Endothelial cell of umbilical vein (primary cell): ENCODE measurements at regions of chr3 and their contacts with region 1.

Region 1: DNA sequence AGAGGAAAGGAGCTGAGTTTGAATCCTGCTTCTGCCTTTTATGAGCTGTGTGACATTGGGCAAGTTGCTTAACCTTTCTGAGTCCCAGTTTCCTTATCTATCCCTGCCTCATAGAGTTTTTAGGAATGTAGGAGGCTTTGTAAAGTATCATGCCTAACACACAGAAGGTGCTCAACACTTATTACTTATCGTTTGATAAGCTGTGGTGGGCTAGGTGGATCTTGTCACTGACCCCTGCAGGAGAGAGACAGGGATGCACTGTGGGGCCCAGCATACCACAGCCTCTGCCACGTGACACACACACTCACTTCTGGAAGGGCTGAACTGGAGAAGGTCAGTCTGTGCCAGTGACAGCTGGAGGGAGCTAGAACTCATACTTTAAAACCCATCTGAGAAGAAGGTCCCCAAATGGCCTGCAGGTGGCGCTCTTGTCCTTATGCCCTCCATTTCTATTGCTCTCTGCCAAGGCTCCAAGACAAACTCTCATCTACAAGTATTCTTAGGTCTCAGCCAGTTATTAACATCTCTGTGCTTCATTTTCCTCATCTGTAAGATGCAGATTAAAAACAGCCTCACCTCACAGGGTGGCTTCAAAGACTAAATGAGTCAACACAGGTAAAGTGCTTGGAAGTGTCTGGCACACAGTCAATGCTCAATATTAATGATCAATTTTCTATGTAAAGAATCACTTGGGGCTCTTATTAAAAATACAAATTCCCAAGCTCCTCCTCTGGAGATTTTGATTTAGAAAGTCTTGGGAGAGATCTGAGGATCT is 57.5 kb upstream of the HACD2 start:
- DNase-seq: peak; percentile 90
- H3K4me3 ChIP-seq: no peak overlapping the region
- H3K27ac ChIP-seq: no peak overlapping the region
- H3K4me1 ChIP-seq: no peaks in the 10 kb centered on the region
- H3K27me3 ChIP-seq: no peaks in the 10 kb centered on the region
- CTCF ChIP-seq: peak; percentile 85 to 97
- POLR2A ChIP-seq: no peak

Region 2: GRCh38 chr3:123284399-123285010 is 357.9 kb before region 1 on chr3:
- CTCF ChIA-PET with region 1: no interaction called
- POLR2A ChIA-PET with region 1: no interaction called
- dilution Hi-C with region 1: no loop called
- intact Hi-C with region 1: no loop called
- DNase-seq: no peak
- H3K4me3 ChIP-seq: no peak overlapping the region
- H3K27ac ChIP-seq: no peak overlapping the region
- H3K4me1 ChIP-seq: no peaks in the 10 kb centered on the region
- H3K27me3 ChIP-seq: no peaks in the 10 kb centered on the region
- CTCF ChIP-seq: no peak
- POLR2A ChIP-seq: no peak

Region 3: GRCh38 chr3:123584988-123585937 is 57.1 kb before region 1 on chr3 and contains the start of gene HACD2:
- CTCF ChIA-PET with region 1: interaction called, 16 read pairs
- POLR2A ChIA-PET with region 1: no interaction called
- dilution Hi-C with region 1: no loop called
- intact Hi-C with region 1: loop called (anchors 1 kb)
- DNase-seq: peak; percentile 98
- H3K4me3 ChIP-seq: peak within 1 kb of the TSS; percentile 66 to 87 (median 85)
- H3K27ac ChIP-seq: peak within 1 kb of the TSS; percentile 90
- H3K4me1 ChIP-seq: peaks cover 7% of the 10 kb centered on the region
- H3K27me3 ChIP-seq: no peaks in the 10 kb centered on the region
- CTCF ChIP-seq: no peak
- POLR2A ChIP-seq: peak; percentile 91
- total RNA-seq, gene HACD2: 20.9 and 23.5 TPM in 2 replicates

Region 4: GRCh38 chr3:123632161-123632655 is 10.2 kb before region 1 on chr3:
- CTCF ChIA-PET with region 1: interaction called, 21 read pairs
- POLR2A ChIA-PET with region 1: interaction called, 3 read pairs
- dilution Hi-C with region 1: no loop called
- intact Hi-C with region 1: no loop called
- DNase-seq: no peak
- H3K4me3 ChIP-seq: no peak overlapping the region
- H3K27ac ChIP-seq: no peak overlapping the region
- H3K4me1 ChIP-seq: no peaks in the 10 kb centered on the region
- H3K27me3 ChIP-seq: no peaks in the 10 kb centered on the region
- CTCF ChIP-seq: no peak
- POLR2A ChIP-seq: no peak

Region 5: GRCh38 chr3:123700791-123701722 is 58.7 kb after region 1 on chr3:
- CTCF ChIA-PET with region 1: interaction called, 19 read pairs
- POLR2A ChIA-PET with region 1: no interaction called
- dilution Hi-C with region 1: no loop called
- intact Hi-C with region 1: no loop called
- DNase-seq: no peak
- H3K4me3 ChIP-seq: no peak overlapping the region
- H3K27ac ChIP-seq: no peak overlapping the region
- H3K4me1 ChIP-seq: peaks cover 3% of the 10 kb centered on the region
- H3K27me3 ChIP-seq: no peaks in the 10 kb centered on the region
- CTCF ChIP-seq: no peak
- POLR2A ChIP-seq: no peak

Region 6: DNA sequence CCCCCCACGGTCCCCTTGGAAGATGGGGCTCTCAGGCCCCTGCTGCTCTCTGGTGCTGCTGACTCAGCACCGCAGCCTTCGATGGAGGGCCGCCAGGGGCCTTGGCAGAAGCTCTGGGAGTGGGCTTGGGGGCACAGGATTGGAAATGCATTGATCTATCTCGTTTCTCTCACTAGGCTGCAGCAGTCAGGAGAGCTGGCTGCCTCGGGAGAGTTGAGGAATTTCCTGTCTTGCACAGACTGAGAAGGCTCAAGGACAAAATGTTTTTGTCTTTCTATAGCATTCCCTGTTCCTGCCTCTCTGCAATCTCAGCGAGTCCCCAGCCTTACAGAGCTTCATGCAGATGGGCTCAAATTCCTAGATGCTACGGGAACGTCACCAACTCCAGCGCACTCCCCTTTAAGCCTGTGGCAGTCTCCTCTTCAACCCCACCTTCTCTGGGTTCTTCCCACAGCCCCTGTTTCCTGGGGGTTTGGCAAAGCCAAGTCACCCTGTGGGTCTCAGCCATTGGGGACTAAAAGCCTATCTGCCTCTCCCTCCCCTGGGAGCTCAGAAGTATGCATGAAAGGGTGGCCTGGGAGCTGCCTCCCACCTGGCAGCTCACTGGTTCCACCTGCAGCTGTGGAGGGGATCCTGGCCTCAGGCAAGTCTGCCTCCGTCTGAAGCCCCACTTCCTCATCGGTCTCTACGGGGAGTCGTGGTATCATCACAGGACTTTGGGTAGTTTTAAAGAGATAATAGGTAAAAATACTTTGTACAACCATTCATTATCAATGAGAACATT is 69.9 kb after region 1 on chr3:
- CTCF ChIA-PET with region 1: interaction called, 32 read pairs
- POLR2A ChIA-PET with region 1: no interaction called
- dilution Hi-C with region 1: no loop called
- intact Hi-C with region 1: no loop called
- DNase-seq: no peak
- H3K4me3 ChIP-seq: no peak overlapping the region
- H3K27ac ChIP-seq: no peak overlapping the region
- H3K4me1 ChIP-seq: no peaks in the 10 kb centered on the region
- H3K27me3 ChIP-seq: peaks cover 3 to 13% of the 10 kb centered on the region in 2 experiments
- CTCF ChIP-seq: no peak
- POLR2A ChIP-seq: no peak

Region 7: GRCh38 chr3:123960781-123961507 is 318.6 kb after region 1 on chr3 and contains the start of gene CCDC14:
- CTCF ChIA-PET with region 1: interaction called, 3 read pairs
- POLR2A ChIA-PET with region 1: no interaction called
- dilution Hi-C with region 1: no loop called
- intact Hi-C with region 1: loop called (anchors 10 kb)
- DNase-seq: peak; percentile 95
- H3K4me3 ChIP-seq: peak within 1 kb of the TSS; percentile 58 to 97 (median 94)
- H3K27ac ChIP-seq: peak within 1 kb of the TSS; percentile 81
- H3K4me1 ChIP-seq: peaks cover 28% of the 10 kb centered on the region
- H3K27me3 ChIP-seq: peaks cover 5 to 7% of the 10 kb centered on the region in 2 experiments
- CTCF ChIP-seq: no peak
- POLR2A ChIP-seq: peak; percentile 67
- total RNA-seq, gene CCDC14: 46.3 and 47.5 TPM in 2 replicates